Transverse colon (tissue), 4 donors: ENCODE measurements at regions of chr14 and their contacts with region 1.

Region 1: GRCh38 chr14:79693935-79694334 is 517.4 kb downstream of the DIO2 start:
- DNase-seq: no peak
- H3K4me3 ChIP-seq: no peak overlapping the region
- H3K27ac ChIP-seq: no peak overlapping the region
- H3K4me1 ChIP-seq: no peaks in the 10 kb centered on the region
- H3K27me3 ChIP-seq: no peaks in the 10 kb centered on the region
- CTCF ChIP-seq: no peak
- EP300 ChIP-seq: no peak
- POLR2A ChIP-seq: no peak

Region 2: GRCh38 chr14:78997811-78998210 is 696.1 kb before region 1 on chr14:
- in situ Hi-C with region 1: no loop called
- intact Hi-C with region 1: no loop called
- DNase-seq: peak; percentile 17
- H3K4me3 ChIP-seq: no peak overlapping the region
- H3K27ac ChIP-seq: no peak overlapping the region
- H3K4me1 ChIP-seq: no peaks in the 10 kb centered on the region
- H3K27me3 ChIP-seq: no peaks in the 10 kb centered on the region
- CTCF ChIP-seq: no peak
- EP300 ChIP-seq: no peak
- POLR2A ChIP-seq: no peak

Region 3: DNA sequence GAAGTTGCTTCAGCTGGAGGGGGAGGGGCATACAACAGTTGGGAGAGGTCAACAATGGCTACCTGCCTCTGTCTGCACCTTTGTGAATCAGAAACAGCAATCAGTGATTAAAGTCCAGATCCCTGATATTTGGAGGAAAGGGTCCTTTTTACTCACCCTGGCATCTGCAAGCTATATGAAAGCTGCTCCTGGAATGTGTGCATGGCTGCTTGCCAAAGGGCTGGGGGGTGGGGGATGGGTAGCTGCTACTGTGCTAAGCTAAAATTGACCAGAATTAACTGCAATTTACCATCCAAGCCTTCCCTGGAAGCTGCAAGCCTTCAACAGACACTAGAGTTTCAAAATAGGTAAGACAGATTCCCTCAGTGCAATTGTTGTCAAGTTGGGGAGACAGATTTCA is 1540.3 kb after region 1 on chr14:
- in situ Hi-C with region 1: no loop called
- intact Hi-C with region 1: loop called (anchors 5 kb)
- DNase-seq: no peak
- H3K4me3 ChIP-seq: no peak overlapping the region
- H3K27ac ChIP-seq: no peak overlapping the region
- H3K4me1 ChIP-seq: no peaks in the 10 kb centered on the region
- H3K27me3 ChIP-seq: no peaks in the 10 kb centered on the region
- CTCF ChIP-seq: no peak
- EP300 ChIP-seq: no peak
- POLR2A ChIP-seq: no peak